Aorta (tissue), 5 donors: ENCODE measurements at regions of chr4 and their contacts with region 1.

Region 1: DNA sequence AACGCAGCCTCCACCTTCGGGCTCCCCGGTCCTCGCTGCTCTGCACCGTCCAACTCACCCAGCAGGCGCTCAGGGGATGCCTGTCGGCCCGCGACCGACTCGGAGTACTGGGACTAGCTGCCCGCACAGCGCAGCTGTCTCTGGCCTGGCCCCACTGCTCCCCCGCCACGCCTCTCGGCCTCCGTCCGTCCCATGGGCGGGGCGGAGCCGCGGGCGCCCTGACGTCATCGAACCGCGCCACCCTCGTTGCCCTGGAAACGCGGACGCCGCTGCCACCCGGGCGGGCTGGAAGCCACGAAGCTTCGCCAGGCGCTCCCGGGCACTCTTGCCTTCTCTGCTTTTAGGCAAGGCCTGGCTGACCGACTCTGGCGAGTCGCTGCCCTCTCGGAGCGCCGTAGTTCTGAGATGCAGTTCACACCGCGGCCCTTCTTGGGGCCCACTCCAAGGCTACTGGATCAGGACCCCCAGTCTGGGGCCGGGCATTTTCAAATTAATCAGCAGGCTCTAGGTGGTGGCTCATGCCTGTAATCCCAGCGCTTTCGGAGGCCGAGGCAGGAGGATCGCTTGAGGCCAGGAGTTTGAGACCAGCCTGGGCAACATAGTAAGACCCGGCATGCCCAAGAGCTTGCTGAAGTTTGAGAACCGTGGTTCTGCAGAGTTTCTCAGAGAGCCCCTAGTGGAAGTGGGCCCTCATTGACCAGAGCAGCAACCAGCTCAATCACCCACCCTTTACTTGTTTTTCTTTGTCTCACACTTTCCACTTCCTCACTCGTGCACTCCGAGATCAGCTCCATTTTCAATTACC is 12.0 kb downstream of the ACOX3 start:
- DNase-seq: peak; percentile 90 to 97
- ATAC-seq: peak; percentile 99
- H3K4me3 ChIP-seq: peak overlapping the region; percentile 60 to 96
- H3K27ac ChIP-seq: peak overlapping the region; percentile 62 to 72
- H3K4me1 ChIP-seq: peaks cover 0 to 6% of the 10 kb centered on the region in 2 donors
- H3K27me3 ChIP-seq: no peaks in the 10 kb centered on the region

Region 2: GRCh38 chr4:8440492-8441341 is 12.2 kb after region 1 on chr4 and contains the starts of genes ACOX3 and TRMT44:
- intact Hi-C with region 1: loop called in 1 of 2 experiments (anchors 1 kb)
- DNase-seq: peak; percentile 93 to 97
- ATAC-seq: peak; percentile 97
- H3K4me3 ChIP-seq: peak within 1 kb of the TSS; percentile 60 to 96
- H3K27ac ChIP-seq: peak within 1 kb of the TSS; percentile 70 to 96
- H3K4me1 ChIP-seq: peaks cover 0 to 10% of the 10 kb centered on the region in 2 donors
- H3K27me3 ChIP-seq: no peaks in the 10 kb centered on the region
- total RNA-seq, gene ACOX3: 37.6 to 43.7 TPM
- total RNA-seq, gene TRMT44: 18.1 to 23.1 TPM